ENCODE measurements at regions of chr6 and their contacts with region 1.

Region 1: DNA sequence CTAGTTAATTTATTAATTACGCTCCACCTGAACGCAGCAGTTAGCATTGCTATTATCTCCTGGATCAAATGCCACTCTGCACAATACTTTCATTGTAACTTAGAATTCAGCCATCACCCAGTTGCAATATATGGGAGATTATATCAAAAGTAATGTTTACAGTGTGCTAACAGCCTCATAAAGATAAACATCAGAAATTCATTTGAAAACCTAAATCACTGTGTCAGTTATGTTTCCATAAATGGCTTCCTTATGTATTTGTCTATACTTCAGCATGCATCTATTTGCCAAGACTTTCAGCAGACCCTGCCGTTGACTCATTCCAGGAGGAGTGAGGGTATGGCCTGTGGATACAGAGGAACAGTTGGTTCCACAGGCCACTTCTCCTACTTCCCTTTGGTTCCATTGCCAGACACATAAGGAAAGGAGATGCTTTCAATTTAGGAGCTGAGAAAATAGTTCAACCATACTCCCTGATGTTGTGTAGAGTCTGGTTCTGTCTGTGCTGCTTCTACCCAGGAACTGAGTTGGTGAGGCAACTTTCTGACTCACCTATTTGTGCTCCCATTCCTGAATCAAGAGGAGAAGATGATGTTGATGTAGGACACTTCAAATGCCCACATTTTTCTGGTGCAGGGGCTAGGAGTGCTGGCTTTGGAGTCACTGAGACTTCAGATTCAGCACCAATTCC is 300.3 kb downstream of the TFAP2B start:
- DNase-seq: peak; percentile 69
- ATAC-seq: peak; percentile 68
- H3K4me3 ChIP-seq: no peak overlapping the region
- H3K27ac ChIP-seq: peak overlapping the region; percentile 46
- H3K4me1 ChIP-seq: peaks cover 24% of the 10 kb centered on the region
- H3K27me3 ChIP-seq: no peaks in the 10 kb centered on the region
- CTCF ChIP-seq: no peak

Region 2: DNA sequence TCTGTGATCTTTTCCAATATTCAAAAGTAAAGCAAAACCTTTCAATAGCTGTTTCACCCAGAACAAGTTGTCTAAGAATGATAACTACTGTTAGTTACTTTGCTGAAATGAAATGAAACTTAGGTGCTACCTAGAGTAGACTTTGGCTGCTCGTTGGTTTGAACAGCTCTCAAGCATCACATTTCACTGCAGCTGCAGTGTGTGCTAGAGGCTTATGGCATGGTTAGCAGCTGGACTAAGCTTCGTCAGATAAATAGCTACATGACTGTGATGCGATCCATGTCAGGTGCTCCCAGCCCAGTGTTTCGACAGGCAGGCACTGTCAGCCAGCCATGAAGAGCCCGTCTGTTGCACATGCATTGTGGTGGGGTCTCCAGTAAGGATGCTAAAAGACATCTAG is 99.1 kb before region 1 on chr6:
- CTCF ChIA-PET with region 1: no interaction called
- POLR2A ChIA-PET with region 1: no interaction called
- intact Hi-C with region 1: no loop called
- DNase-seq: no peak
- ATAC-seq: no peak
- H3K4me3 ChIP-seq: no peak overlapping the region
- H3K27ac ChIP-seq: no peak overlapping the region
- H3K4me1 ChIP-seq: peaks cover 11% of the 10 kb centered on the region
- H3K27me3 ChIP-seq: no peaks in the 10 kb centered on the region
- CTCF ChIP-seq: no peak

Region 3: DNA sequence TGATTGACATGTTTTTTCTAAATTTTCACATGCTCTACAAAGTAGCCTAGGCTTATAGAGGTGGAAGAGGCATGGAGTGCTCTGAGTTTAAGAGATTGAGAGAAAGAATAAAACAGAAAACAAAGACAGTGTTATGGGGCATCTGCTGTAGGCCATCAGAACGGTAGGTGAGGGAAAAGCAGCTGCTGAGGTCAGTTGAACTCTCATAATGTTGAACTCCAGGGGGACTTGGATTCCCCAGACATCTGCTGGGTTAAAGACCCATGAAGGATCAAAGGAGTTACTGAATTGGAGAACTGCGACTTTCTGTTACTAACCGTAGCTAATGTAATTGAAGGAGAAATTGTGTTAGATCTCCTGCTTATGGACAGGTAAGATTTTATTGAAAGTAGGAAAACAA is 33.7 kb after region 1 on chr6:
- CTCF ChIA-PET with region 1: no interaction called
- POLR2A ChIA-PET with region 1: no interaction called
- intact Hi-C with region 1: loop called (anchors 2 kb)
- DNase-seq: no peak
- ATAC-seq: no peak
- H3K4me3 ChIP-seq: no peak overlapping the region
- H3K27ac ChIP-seq: no peak overlapping the region
- H3K4me1 ChIP-seq: peaks cover 15% of the 10 kb centered on the region
- H3K27me3 ChIP-seq: no peaks in the 10 kb centered on the region
- CTCF ChIP-seq: no peak

Region 4: DNA sequence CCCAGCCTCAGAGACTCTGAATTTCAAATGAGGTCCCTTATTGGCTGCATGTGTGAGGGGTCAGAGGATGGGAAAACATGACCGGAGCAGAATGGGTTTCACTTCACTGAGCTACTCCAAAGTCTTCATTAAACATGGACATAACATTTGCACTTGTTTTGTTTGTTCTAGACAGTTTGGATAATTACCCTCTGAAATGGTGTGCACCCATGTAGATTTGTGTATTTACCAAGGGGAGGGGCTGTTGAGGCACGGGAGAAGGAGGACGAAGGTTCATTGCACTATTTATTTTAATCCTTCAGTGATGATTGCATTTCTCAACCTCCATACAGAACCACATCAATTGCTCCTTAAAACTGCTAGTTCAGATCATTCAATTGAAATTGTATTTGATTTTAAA is 63.9 kb after region 1 on chr6:
- CTCF ChIA-PET with region 1: no interaction called
- POLR2A ChIA-PET with region 1: no interaction called
- intact Hi-C with region 1: no loop called
- DNase-seq: no peak
- ATAC-seq: no peak
- H3K4me3 ChIP-seq: no peak overlapping the region
- H3K27ac ChIP-seq: no peak overlapping the region
- H3K4me1 ChIP-seq: no peaks in the 10 kb centered on the region
- H3K27me3 ChIP-seq: no peaks in the 10 kb centered on the region
- CTCF ChIP-seq: no peak

Region 5: DNA sequence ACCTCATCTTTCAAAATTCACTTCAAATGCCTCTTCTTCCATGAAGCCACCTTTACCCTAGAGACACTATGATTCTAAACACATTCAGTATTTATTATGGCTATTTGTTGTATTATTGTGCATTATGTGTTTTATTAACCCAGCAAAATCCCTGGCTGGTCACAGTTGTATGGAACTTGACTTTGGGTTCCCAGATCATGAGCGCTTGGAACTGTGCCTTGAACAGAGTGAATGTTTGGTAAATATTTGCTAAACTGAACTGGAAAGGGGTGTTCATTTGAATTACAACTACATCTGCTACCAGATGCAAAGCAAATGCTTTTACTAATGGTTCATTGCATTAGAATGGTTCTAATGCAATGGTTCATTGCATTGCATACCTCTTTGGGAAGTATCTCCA is 708.6 kb after region 1 on chr6:
- CTCF ChIA-PET with region 1: no interaction called
- POLR2A ChIA-PET with region 1: no interaction called
- intact Hi-C with region 1: no loop called
- DNase-seq: no peak
- ATAC-seq: no peak
- H3K4me3 ChIP-seq: no peak overlapping the region
- H3K27ac ChIP-seq: no peak overlapping the region
- H3K4me1 ChIP-seq: peaks cover 6% of the 10 kb centered on the region; the same call in 1 of the 2 replicates
- H3K27me3 ChIP-seq: no peaks in the 10 kb centered on the region
- CTCF ChIP-seq: no peak

Measured in PC-3 (cell line).